HepG2 (cell line): ENCODE measurements at regions of chr1 and their contacts with region 1.

Region 1: GRCh38 chr1:184051485-184052193 is at the start of gene TSEN15:
- DNase-seq: peak; percentile 77
- ATAC-seq: peak; percentile 98
- H3K4me3 ChIP-seq: peak within 1 kb of the TSS; percentile 80 to 96 (median 85)
- H3K27ac ChIP-seq: peak within 1 kb of the TSS; percentile 94
- H3K4me1 ChIP-seq: peaks cover 28% of the 10 kb centered on the region
- H3K27me3 ChIP-seq: no peaks in the 10 kb centered on the region; a peak in 1 of 5 replicates
- CTCF ChIP-seq: peak; percentile 5; the same call in 1 of the 2 replicates
- EP300 ChIP-seq: peak; percentile 10 to 46; a peak in 1 of 4 replicates
- POLR2A ChIP-seq: peak; percentile 77 to 84; a peak in 3 of 4 replicates
- RAD21 ChIP-seq: peak; percentile 52
- total RNA-seq, gene TSEN15: 35.8 and 44.3 TPM in 2 replicates

Region 2: GRCh38 chr1:183471743-183472487 is 579.7 kb before region 1 on chr1:
- CTCF ChIA-PET with region 1: no interaction called
- POLR2A ChIA-PET with region 1: no interaction called
- in situ Hi-C with region 1: no loop called
- intact Hi-C with region 1: loop called (anchors 2 kb)
- DNase-seq: peak; percentile 96
- ATAC-seq: peak; percentile 80
- H3K4me3 ChIP-seq: peak overlapping the region; percentile 80 to 99 (median 87)
- H3K27ac ChIP-seq: peak overlapping the region; percentile 100
- H3K4me1 ChIP-seq: peaks cover 53% of the 10 kb centered on the region
- H3K27me3 ChIP-seq: no peaks in the 10 kb centered on the region; a peak in 1 of 5 replicates
- CTCF ChIP-seq: peak; percentile 32; the same call in 1 of the 2 replicates
- EP300 ChIP-seq: no peak
- POLR2A ChIP-seq: peak; percentile 50 to 64; a peak in 3 of 4 replicates
- RAD21 ChIP-seq: peak; percentile 35

Region 3: GRCh38 chr1:183942933-183943693 is 108.5 kb before region 1 on chr1:
- CTCF ChIA-PET with region 1: no interaction called
- POLR2A ChIA-PET with region 1: no interaction called
- in situ Hi-C with region 1: no loop called
- intact Hi-C with region 1: no loop called
- DNase-seq: no peak
- ATAC-seq: no peak
- H3K4me3 ChIP-seq: no peak overlapping the region
- H3K27ac ChIP-seq: no peak overlapping the region
- H3K4me1 ChIP-seq: peaks cover 15% of the 10 kb centered on the region
- H3K27me3 ChIP-seq: no peaks in the 10 kb centered on the region
- CTCF ChIP-seq: no peak
- EP300 ChIP-seq: no peak
- POLR2A ChIP-seq: no peak
- RAD21 ChIP-seq: no peak

Region 4: DNA sequence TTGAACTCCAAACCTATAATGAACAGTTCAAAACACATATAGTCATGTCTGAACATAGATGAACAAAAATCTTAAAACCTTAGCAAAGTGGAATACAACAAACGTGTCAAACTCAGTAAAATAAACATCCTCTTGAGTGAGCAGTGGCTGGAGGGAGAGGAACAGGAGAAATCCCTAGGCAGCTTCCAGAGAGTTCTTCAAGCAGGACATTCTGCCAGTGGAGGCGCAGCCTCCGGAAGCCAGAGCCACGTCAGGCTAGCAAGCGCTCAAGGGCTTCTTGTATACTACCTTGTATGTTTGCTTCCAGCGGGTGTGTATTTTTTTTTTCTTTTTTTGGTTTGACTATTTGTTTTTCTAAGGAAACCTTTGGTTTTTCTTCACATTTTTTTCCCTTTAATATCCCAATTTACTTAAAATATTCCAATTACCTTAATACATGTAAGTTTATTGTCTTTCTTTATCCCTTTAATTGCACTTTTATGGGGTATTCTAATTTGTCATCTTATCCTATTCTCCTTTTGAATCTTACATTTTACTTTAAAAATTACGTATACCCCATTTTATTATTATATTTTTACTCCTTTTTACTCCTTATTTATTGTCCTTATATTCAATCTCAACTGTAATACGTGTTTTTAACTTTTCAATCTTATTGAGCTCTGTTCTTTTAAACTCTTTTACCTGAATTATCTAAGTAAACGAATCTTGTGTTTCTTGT is 56.2 kb before region 1 on chr1:
- CTCF ChIA-PET with region 1: no interaction called
- POLR2A ChIA-PET with region 1: interaction called, 4 read pairs
- in situ Hi-C with region 1: no loop called
- intact Hi-C with region 1: loop called (anchors 5 kb)
- DNase-seq: no peak
- ATAC-seq: no peak
- H3K4me3 ChIP-seq: no peak overlapping the region; a peak in 1 of 6 replicates
- H3K27ac ChIP-seq: no peak overlapping the region
- H3K4me1 ChIP-seq: peaks cover 67% of the 10 kb centered on the region
- H3K27me3 ChIP-seq: no peaks in the 10 kb centered on the region
- CTCF ChIP-seq: no peak
- EP300 ChIP-seq: no peak
- POLR2A ChIP-seq: no peak
- RAD21 ChIP-seq: no peak

Region 5: DNA sequence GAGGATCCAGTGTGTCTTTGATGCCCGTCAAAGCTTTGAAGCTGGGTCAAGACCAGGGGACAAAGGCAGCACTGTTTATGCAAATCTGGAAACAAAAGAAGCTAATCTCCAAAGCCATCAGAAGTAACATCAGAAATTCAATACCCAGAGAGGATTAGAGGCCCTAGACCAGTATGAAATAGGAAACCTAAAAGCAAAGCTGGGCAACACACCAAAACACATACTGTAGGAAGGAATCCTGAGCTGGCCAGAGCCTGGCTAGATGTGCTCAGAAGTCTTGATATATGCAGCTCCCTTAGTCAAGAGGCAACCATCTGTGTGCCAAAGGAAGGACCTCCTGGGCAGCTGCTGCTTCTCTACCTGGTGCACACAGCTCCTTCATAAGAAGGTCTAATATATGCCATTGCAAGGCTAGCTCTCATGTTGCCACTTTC is 26.4 kb before region 1 on chr1:
- CTCF ChIA-PET with region 1: no interaction called
- POLR2A ChIA-PET with region 1: interaction called, 14 read pairs
- in situ Hi-C with region 1: no loop called
- intact Hi-C with region 1: no loop called
- DNase-seq: peak; percentile 80
- ATAC-seq: peak; percentile 92
- H3K4me3 ChIP-seq: no peak overlapping the region
- H3K27ac ChIP-seq: no peak overlapping the region
- H3K4me1 ChIP-seq: peaks cover 22% of the 10 kb centered on the region
- H3K27me3 ChIP-seq: no peaks in the 10 kb centered on the region; a peak in 2 of 5 replicates
- CTCF ChIP-seq: no peak
- EP300 ChIP-seq: no peak
- POLR2A ChIP-seq: no peak
- RAD21 ChIP-seq: no peak

Region 6: GRCh38 chr1:184036517-184036949 is 15.1 kb before region 1 on chr1:
- CTCF ChIA-PET with region 1: no interaction called
- POLR2A ChIA-PET with region 1: interaction called, 17 read pairs
- in situ Hi-C with region 1: no loop called
- intact Hi-C with region 1: no loop called
- DNase-seq: peak; percentile 42
- ATAC-seq: peak; percentile 85
- H3K4me3 ChIP-seq: peak overlapping the region; percentile 41 to 74 (median 66); a peak in 5 of 6 replicates
- H3K27ac ChIP-seq: no peak overlapping the region
- H3K4me1 ChIP-seq: peaks cover 31% of the 10 kb centered on the region
- H3K27me3 ChIP-seq: peaks cover 1 to 51% of the 10 kb centered on the region in 2 experiments; a peak in 4 of 5 replicates
- CTCF ChIP-seq: no peak
- EP300 ChIP-seq: no peak
- POLR2A ChIP-seq: no peak
- RAD21 ChIP-seq: no peak

Region 7: GRCh38 chr1:184801503-184801902 is 749.9 kb after region 1 on chr1:
- CTCF ChIA-PET with region 1: no interaction called
- POLR2A ChIA-PET with region 1: no interaction called
- in situ Hi-C with region 1: no loop called
- intact Hi-C with region 1: no loop called
- DNase-seq: no peak
- ATAC-seq: no peak
- H3K4me3 ChIP-seq: no peak overlapping the region
- H3K27ac ChIP-seq: no peak overlapping the region
- H3K4me1 ChIP-seq: peaks cover 9% of the 10 kb centered on the region
- H3K27me3 ChIP-seq: no peaks in the 10 kb centered on the region
- CTCF ChIP-seq: no peak
- EP300 ChIP-seq: no peak
- POLR2A ChIP-seq: no peak
- RAD21 ChIP-seq: no peak